ENCODE measurements at regions of chr2 and their contacts with region 1.

Region 1: DNA sequence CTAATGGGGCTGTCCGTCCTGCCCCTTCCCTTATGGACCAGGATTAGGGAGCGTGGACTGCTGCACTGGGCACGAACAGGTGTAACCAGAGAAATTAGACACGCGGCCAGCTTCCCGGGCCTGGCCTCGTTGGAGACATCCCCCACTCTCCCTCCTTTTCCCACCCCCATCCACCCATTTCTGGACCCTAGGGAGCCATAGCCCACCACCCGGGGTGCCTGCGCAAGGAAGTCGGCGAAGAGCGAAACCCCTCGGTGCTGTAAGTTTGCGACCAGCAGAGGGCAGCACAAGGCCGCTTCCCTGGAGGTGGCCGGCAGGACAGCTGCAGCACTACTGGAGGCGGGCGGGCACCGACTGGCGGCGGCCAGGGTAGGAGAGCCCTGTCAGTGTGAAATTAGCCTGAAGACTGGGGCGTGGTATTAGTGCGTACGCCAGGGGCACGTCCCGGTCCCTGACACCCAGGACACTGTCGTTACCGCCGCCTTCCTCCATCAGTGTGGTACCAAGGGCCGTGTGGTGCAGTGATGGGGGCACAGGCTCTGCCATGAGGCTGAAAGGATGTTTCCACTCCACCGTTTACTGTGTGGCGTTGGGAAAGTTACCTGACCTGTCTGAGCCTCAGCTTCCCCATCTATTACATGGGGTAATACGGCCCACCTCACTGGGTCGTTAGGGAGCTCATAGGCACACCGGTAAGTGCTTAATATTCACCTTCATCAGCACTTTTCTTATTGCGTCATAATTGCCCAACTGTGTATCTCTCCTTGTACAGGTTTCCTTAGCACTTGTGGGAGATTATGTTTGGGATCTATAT is 36.0 kb upstream of the CD207 start:
- DNase-seq: no peak
- H3K4me3 ChIP-seq: no peak overlapping the region
- CTCF ChIP-seq: peak; percentile 99

Region 2: GRCh38 chr2:70887550-70888246 is 16.1 kb after region 1 on chr2:
- CTCF ChIA-PET with region 1: interaction called, 23 read pairs
- POLR2A ChIA-PET with region 1: no interaction called
- DNase-seq: no peak
- H3K4me3 ChIP-seq: peak overlapping the region; percentile 36
- CTCF ChIP-seq: no peak

Region 3: DNA sequence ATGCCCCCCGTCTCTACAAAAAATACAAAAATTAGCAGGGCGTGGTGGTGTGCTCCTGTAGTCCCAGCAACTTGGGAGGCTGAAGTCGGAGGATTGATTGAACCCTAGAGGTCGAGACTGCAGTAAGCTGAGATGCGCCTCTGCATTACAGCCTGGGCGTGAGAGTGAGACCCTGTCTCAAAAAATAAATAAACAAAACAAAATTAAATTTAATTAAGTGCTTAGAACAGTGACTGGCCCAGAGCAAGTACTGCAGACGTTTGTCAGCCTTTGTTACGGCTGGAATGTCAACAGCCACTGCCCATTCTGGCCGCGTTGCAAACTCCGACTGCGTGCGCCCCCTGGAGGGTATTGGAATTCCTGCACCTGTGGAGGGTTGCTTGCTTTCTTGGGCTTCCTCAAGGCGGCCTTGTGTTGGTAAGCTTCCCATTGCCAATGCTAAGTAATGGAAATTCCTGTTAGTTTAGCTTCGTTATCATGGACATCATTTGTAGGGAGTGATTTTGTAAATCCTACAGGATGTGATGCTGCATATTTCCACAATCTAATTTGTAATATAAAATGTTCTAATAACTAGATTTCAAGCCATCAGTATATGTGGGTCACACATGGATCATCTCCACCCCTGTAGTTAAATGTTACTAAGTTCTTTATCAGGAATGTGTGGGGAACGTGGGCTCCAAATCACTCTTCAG is 48.2 kb after region 1 on chr2:
- CTCF ChIA-PET with region 1: interaction called, 166 read pairs
- POLR2A ChIA-PET with region 1: no interaction called
- DNase-seq: no peak
- H3K4me3 ChIP-seq: no peak overlapping the region
- CTCF ChIP-seq: peak; percentile 94

Region 4: DNA sequence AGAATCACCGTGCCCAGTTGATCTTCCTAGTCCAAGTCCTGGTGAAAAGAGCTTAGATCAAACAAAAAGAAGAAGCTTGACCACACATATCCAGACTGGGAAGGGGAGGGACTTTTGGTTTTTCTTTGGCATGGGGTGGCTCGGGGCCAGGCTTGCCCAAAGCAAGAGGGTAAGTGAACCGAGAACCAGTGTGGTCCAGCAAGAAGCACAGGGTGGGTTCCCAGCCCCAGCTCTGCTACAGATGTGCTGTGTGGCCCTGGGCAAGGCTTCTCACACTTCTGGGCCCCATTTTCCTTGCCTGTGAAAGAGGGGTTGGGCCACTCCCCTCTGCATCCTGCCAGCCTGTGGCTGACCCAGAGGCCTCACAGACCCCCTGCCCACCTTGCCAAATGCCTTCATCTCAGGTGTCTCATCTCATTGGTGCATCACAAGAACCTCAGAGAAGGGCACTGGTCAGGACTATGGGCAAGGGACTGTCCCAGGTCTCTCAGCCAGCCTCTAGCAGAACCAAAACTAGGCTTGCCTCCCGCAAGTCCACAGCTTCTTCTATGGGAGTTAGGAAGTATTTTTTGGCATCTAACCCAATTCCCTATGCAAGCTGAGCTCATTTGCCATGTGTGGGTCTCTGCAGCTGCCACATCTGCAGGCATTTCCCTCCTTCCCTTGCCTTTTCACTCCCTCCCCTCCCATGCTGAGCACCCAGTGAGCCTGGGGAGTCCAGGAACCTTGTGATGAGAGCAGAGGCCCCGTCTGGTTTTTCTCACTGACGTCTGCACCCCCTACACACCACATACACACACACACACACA is 71.0 kb after region 1 on chr2:
- CTCF ChIA-PET with region 1: interaction called, 299 read pairs
- POLR2A ChIA-PET with region 1: no interaction called
- DNase-seq: no peak
- H3K4me3 ChIP-seq: no peak overlapping the region
- CTCF ChIP-seq: no peak

Region 5: DNA sequence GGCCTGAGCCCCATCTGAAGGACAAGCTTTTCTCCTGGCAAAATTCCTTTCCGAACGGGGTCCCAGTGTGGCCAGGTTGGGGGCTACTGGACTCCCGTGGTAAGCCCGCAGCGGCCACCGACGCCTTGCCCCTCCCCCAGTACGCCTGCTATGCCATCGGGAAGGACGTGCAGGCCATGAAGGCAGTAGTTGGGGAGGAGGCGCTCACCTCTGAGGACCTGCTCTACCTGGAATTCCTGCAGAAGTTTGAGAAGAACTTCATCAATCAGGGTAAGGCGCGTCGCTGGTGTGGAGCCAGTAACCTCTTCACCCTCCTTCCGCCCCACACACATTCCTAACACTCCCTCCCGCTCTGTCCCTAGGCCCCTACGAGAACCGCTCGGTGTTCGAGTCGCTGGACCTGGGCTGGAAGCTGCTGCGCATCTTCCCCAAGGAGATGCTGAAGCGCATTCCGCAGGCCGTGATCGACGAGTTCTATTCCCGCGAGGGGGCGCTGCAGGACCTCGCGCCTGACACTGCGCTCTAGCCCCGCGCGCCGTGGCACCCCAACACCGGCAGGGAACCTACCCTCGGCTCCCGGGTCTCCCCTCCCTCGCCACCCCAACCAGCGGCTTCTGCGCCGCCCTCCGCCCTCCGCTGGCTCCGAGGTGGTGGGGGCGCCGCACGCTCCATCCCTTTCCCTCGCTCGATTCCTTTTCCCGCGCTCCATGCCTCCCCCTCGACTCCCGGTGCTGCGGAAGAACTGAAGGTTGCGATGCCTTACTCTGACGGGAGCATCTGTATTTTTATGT is 93.2 kb after region 1 on chr2:
- CTCF ChIA-PET with region 1: interaction called, 51 read pairs
- POLR2A ChIA-PET with region 1: no interaction called
- DNase-seq: no peak
- H3K4me3 ChIP-seq: peak overlapping the region; percentile 60
- CTCF ChIP-seq: peak; percentile 89